A673 (cell line): ENCODE measurements at regions of chr1 and their contacts with region 1.

Region 1: DNA sequence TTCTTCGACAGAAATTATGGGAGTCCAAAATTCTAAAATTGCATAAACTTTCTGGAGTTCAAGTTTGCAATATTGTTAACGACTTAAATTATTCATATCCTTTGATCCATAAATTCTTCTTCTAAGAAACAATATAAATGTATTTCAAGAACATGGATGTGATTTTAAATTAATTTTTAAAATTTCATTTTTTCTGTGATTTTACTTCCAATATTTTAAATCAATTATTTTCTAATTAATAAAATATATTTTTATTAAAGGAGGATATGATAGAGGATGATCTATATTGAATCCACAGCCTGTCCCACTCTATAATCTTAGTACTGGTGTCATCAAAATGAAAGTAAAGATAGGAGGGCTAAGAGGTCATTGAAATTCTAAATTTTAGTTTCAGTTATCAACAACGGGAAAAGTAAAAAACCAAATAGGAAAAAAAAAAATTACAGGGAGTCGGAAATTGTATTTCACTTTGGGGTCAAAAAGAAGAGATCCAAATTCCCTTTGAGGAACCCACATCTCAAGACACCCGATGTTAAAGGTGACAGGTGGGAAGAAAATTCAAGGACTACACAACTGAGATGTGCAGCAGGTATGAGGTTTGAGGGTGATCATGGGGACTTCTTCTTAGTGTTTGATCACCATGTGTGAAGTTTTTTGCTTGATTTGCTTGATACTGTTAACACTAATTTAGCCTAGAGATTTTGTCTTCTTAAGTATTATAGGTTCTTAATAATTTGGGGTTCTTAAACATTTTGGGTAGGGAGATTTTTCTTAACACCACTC is 154.8 kb upstream of the RGS18 start:
- DNase-seq: no peak
- H3K4me3 ChIP-seq: no peak overlapping the region
- H3K27ac ChIP-seq: no peak overlapping the region
- H3K4me1 ChIP-seq: peaks cover 17% of the 10 kb centered on the region
- H3K27me3 ChIP-seq: no peaks in the 10 kb centered on the region
- CTCF ChIP-seq: no peak

Region 2: DNA sequence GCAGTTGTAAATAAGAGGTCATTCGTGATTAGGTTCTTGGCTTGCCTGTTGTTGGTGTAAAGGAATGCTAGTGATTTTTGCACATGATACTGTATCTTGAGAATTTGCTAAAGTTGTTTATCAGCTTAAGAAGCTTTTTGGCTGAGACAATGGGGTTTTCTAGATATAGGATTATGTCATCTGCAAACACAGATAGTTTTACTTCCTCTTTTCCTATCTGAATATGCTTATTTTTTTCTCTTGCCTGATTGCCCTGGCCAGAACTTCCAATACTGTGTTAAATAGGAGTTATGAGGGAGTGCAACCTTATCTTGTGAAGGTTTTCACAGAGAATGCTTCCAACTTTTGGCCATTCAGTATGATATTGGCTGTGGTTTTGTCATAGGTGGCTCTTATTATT is 421.3 kb before region 1 on chr1:
- CTCF ChIA-PET with region 1: no interaction called
- POLR2A ChIA-PET with region 1: no interaction called
- intact Hi-C with region 1: loop called (anchors 10 kb)
- DNase-seq: no peak
- H3K4me3 ChIP-seq: no peak overlapping the region
- H3K27ac ChIP-seq: no peak overlapping the region
- H3K4me1 ChIP-seq: no peaks in the 10 kb centered on the region
- H3K27me3 ChIP-seq: no peaks in the 10 kb centered on the region
- CTCF ChIP-seq: no peak

Region 3: GRCh38 chr1:191869790-191870312 is 133.6 kb before region 1 on chr1:
- CTCF ChIA-PET with region 1: no interaction called
- POLR2A ChIA-PET with region 1: no interaction called
- intact Hi-C with region 1: no loop called
- DNase-seq: no peak
- H3K4me3 ChIP-seq: no peak overlapping the region
- H3K27ac ChIP-seq: no peak overlapping the region
- H3K4me1 ChIP-seq: no peaks in the 10 kb centered on the region
- H3K27me3 ChIP-seq: no peaks in the 10 kb centered on the region
- CTCF ChIP-seq: no peak

Region 4: GRCh38 chr1:192225703-192226102 is 222.2 kb after region 1 on chr1:
- CTCF ChIA-PET with region 1: no interaction called
- POLR2A ChIA-PET with region 1: no interaction called
- intact Hi-C with region 1: loop called (anchors 1 kb)
- DNase-seq: peak; percentile 96
- H3K4me3 ChIP-seq: no peak overlapping the region
- H3K27ac ChIP-seq: peak overlapping the region; percentile 85
- H3K4me1 ChIP-seq: peaks cover 35% of the 10 kb centered on the region
- H3K27me3 ChIP-seq: no peaks in the 10 kb centered on the region
- CTCF ChIP-seq: no peak

Region 5: DNA sequence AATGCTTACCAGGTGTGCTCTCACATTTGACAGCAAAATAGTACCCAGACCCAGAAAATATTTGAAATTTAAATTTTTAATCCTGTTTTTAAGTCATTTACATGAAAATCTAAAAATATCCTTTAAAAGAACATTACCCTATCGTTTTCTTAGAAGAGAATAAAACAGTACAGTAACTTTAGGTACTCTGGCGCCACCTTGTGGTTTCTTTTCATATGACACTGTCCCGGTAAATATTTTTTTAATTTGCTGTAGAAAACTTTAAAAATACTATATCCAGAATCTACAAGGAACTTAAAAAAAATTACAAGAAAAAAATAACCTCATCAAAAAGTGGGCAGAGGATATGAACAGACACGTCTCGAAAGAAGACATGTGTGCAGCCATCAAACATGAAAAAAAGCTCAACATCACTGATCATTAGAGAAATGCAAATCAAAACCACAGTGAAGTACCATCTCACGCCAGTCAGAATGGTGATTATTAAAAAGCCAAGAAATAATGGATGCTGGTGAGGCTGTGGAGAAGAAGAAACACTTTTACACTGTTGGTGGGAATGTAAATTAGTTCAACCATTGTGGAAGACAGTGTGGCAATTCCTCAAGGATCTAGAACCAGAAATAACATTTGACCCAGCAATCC is 442.5 kb after region 1 on chr1:
- CTCF ChIA-PET with region 1: no interaction called
- POLR2A ChIA-PET with region 1: interaction called, 3 read pairs
- intact Hi-C with region 1: loop called (anchors 1 kb)
- DNase-seq: peak; percentile 77
- H3K4me3 ChIP-seq: no peak overlapping the region
- H3K27ac ChIP-seq: peak overlapping the region; percentile 70
- H3K4me1 ChIP-seq: peaks cover 41% of the 10 kb centered on the region
- H3K27me3 ChIP-seq: no peaks in the 10 kb centered on the region
- CTCF ChIP-seq: peak; percentile 84

Region 6: DNA sequence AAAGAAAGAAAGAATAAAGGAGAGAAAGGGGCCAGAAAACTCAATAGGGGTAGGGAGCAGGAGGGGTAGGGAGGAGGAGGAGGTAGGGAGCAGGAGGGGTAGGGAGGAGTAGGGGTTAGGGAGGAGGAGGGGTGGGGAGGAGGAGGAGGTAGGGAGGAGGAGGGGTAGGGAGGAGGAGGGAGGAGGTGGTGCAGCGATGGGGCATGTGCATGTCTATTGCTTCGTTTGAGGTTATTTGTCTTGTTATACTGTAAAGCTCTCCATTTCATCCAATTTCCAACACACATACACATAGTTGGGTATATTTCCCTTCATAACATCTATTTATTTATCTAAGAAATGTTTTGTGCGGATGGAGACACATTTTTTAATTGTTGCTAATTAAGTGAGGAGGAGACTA is 591.8 kb after region 1 on chr1:
- CTCF ChIA-PET with region 1: no interaction called
- POLR2A ChIA-PET with region 1: interaction called, 11 read pairs
- intact Hi-C with region 1: no loop called
- DNase-seq: no peak
- H3K4me3 ChIP-seq: no peak overlapping the region
- H3K27ac ChIP-seq: no peak overlapping the region
- H3K4me1 ChIP-seq: peaks cover 17% of the 10 kb centered on the region
- H3K27me3 ChIP-seq: no peaks in the 10 kb centered on the region
- CTCF ChIP-seq: no peak